Naive thymus-derived CD4-positive, alpha-beta T cell (primary cell): ENCODE measurements at regions of chr6 and their contacts with region 1.

Region 1: GRCh38 chr6:105402939-105403935 is at the start of gene PREP:
- DNase-seq: peak; percentile 64 to 90 (median 81)
- ATAC-seq: peak; percentile 96
- H3K4me3 ChIP-seq: peak within 1 kb of the TSS; percentile 83
- H3K4me3 Mint-ChIP-seq: peak within 1 kb of the TSS; percentile 92 to 98 (median 94)
- H3K27ac ChIP-seq: peak within 1 kb of the TSS; percentile 66
- H3K27ac Mint-ChIP-seq: peak within 1 kb of the TSS; percentile 45 to 92 (median 76)
- H3K4me1 ChIP-seq: peaks cover 27 to 28% of the 10 kb centered on the region in 2 donors
- H3K4me1 Mint-ChIP-seq: peaks cover 43 to 58% (median 54%) of the 10 kb centered on the region in 7 donors
- H3K27me3 ChIP-seq: no peaks in the 10 kb centered on the region
- H3K27me3 Mint-ChIP-seq: peaks cover 0 to 18% (median 14%) of the 10 kb centered on the region in 5 donors
- total RNA-seq, gene PREP: 22.2 to 46.7 (median 32.1) TPM

Region 2: DNA sequence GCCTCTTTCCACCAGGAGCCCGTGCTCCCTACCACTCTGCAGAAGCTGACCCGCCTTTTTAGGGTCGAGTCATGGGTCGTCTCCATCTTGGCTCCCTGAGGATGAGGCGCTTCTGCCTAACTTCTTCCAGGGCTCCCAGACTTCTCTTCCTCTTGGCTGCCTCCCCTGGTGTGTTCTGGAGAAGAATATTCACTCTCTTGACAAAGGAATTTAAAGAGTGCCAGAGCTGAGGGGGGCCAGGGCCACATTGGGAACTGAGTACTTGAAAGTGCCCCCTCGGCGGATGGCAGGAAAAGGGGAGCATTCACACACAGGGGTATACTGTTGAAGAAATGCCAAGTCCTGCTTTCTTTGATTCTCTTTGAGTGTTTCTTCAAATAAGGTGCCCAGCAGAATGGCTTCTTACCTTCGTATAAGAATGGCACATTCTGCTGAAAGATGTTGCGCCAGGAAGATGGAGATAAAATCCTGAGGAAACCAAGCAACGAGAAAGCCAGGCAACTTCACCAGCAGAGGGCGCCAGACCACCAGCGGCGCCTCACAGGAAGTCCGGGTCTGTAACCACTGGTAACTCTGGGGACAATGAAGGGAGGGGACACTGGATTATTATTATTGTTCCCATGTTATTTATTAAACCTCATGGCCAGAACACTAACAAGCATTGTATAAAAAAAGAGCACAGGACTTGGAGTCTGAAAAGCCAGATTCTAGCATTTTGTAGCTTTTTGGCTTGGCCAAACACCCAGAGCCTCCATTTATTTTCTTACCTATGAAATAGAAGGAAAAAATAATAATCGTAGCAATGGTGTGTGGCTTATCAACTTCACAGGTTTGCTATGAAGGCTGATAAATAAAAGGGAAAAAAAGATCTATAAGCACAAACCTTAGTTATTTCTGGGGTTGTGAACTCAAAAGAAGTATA is 720.3 kb before region 1 on chr6:
- CTCF ChIA-PET with region 1: interaction called, 3 read pairs
- POLR2A ChIA-PET with region 1: no interaction called
- intact Hi-C with region 1: loop called (anchors 10 kb)
- DNase-seq: peak; percentile 31 to 74 (median 63)
- ATAC-seq: peak; percentile 68
- H3K4me3 ChIP-seq: no peak overlapping the region
- H3K4me3 Mint-ChIP-seq: peak overlapping the region in 4 of 10 donors; percentile 5 to 40 (median 28)
- H3K27ac ChIP-seq: no peak overlapping the region
- H3K27ac Mint-ChIP-seq: peak overlapping the region in 1 of 9 donors; percentile 26
- H3K4me1 ChIP-seq: peaks cover 4 to 7% of the 10 kb centered on the region in 2 donors
- H3K4me1 Mint-ChIP-seq: peaks cover 8 to 24% (median 20%) of the 10 kb centered on the region in 7 donors
- H3K27me3 ChIP-seq: no peaks in the 10 kb centered on the region
- H3K27me3 Mint-ChIP-seq: no peaks in the 10 kb centered on the region

Region 3: GRCh38 chr6:105087571-105088211 is 315.5 kb before region 1 on chr6:
- CTCF ChIA-PET with region 1: interaction called, 7 read pairs
- POLR2A ChIA-PET with region 1: no interaction called
- intact Hi-C with region 1: loop called in 1 of 2 experiments (anchors 1 kb)
- DNase-seq: peak in 6 of 9 donors; percentile 11 to 43 (median 32)
- ATAC-seq: peak; percentile 67
- H3K4me3 ChIP-seq: no peak overlapping the region
- H3K4me3 Mint-ChIP-seq: no peak overlapping the region
- H3K27ac ChIP-seq: no peak overlapping the region
- H3K27ac Mint-ChIP-seq: no peak overlapping the region
- H3K4me1 ChIP-seq: no peaks in the 10 kb centered on the region
- H3K4me1 Mint-ChIP-seq: no peaks in the 10 kb centered on the region
- H3K27me3 ChIP-seq: no peaks in the 10 kb centered on the region
- H3K27me3 Mint-ChIP-seq: peaks cover 4 to 10% (median 6%) of the 10 kb centered on the region in 5 donors

Region 4: DNA sequence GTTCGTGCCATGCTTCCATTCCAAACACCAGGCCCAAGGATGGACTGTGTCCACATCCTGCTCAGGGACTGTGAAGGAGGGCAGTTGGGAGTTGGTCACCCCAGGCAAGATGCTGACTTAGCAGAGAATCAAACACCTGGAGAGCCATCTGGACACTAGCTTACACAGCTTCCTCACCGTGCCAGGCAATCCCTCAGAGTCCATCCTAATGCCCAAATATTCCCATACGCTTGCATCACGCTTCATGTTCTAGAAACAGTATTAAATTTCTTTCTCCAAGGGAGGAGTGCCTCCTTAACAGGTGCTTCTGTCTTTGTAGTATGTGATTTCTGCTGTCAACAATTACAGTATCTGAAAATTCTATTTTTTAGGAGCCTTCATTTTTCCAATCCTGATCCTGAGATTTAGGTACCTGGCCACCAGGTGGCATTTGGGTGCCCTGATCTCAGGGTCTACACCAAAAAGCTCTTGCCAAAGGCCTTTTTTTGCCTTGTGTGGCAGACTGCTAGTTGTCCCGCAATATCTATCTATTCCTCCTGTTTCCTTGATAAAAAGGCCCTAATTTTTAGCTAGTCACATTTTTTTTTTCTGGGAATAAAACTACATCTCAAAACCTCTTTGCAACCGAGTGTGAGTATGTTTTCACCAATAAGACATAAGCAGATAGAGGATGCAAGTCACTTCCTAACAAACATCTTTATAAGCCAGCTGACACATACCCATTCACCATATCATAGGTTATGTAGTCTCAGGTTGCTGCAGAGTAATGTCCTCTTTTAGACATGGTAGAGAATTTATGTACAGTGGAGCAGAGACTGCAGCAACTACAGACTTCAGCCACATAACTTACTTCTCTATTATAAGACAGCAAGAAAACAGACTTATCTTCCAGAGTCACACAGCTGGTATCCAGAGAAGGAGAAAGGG is 85.4 kb before region 1 on chr6:
- CTCF ChIA-PET with region 1: no interaction called
- POLR2A ChIA-PET with region 1: no interaction called
- intact Hi-C with region 1: loop called (anchors 1 to 2 kb)
- DNase-seq: no peak
- ATAC-seq: no peak
- H3K4me3 ChIP-seq: no peak overlapping the region
- H3K4me3 Mint-ChIP-seq: no peak overlapping the region
- H3K27ac ChIP-seq: no peak overlapping the region
- H3K27ac Mint-ChIP-seq: no peak overlapping the region
- H3K4me1 ChIP-seq: no peaks in the 10 kb centered on the region
- H3K4me1 Mint-ChIP-seq: peaks cover 0 to 5% (median 0%) of the 10 kb centered on the region in 7 donors
- H3K27me3 ChIP-seq: no peaks in the 10 kb centered on the region
- H3K27me3 Mint-ChIP-seq: no peaks in the 10 kb centered on the region

Region 5: GRCh38 chr6:105992315-105992961 is 589.2 kb after region 1 on chr6:
- CTCF ChIA-PET with region 1: no interaction called
- POLR2A ChIA-PET with region 1: no interaction called
- intact Hi-C with region 1: loop called in 1 of 2 experiments (anchors 5 kb)
- DNase-seq: peak; percentile 82 to 91 (median 89)
- ATAC-seq: peak; percentile 93
- H3K4me3 ChIP-seq: peak overlapping the region; percentile 89
- H3K4me3 Mint-ChIP-seq: peak overlapping the region; percentile 88 to 98 (median 92)
- H3K27ac ChIP-seq: peak overlapping the region; percentile 79
- H3K27ac Mint-ChIP-seq: peak overlapping the region; percentile 87 to 97 (median 93)
- H3K4me1 ChIP-seq: peaks cover 14 to 23% of the 10 kb centered on the region in 2 donors
- H3K4me1 Mint-ChIP-seq: peaks cover 16 to 58% (median 29%) of the 10 kb centered on the region in 7 donors
- H3K27me3 ChIP-seq: peaks cover 0 to 32% of the 10 kb centered on the region in 2 donors
- H3K27me3 Mint-ChIP-seq: peaks cover 48 to 73% (median 62%) of the 10 kb centered on the region in 5 donors

Region 6: DNA sequence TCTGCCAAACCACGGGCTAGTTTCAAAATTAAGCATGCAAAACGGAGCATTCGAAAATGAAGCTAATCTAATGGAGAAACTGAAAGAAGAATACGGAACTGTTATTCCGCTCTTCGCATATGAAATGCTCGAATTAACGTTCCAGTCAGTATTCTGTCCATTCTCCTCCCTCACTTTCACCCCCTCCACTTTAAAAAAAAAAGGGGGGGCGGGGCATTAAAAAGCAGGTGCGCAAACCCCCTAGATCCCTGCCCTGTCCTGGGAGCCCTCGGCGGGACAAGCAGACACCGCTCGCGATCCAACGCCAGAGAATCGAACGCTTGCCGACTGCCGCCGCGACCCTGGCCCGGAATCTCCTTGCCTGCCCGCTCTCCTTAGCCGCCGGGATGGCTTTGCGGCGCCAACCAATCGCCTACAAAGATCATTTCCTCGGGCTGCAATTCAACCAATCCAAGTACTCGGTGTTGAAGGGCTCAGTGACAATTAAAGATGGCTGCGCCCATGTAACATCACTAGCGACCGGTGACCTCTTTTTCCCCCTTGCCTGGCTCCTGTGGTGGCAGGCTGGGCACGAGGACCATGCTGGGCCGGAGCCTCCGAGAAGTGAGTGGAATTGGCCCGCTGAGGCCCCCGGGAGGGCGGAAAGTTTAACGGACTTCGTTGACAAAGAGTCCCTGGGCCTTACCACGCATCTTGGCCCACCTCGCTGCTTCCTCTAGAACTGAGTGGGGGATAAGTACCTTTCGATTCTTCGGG is 1226.0 kb after region 1 on chr6 and contains the starts of genes QRSL1 and RTN4IP1:
- CTCF ChIA-PET with region 1: no interaction called
- POLR2A ChIA-PET with region 1: no interaction called
- intact Hi-C with region 1: loop called in 1 of 2 experiments (anchors 10 kb)
- DNase-seq: peak; percentile 67 to 94 (median 90)
- ATAC-seq: peak; percentile 98
- H3K4me3 ChIP-seq: peak within 1 kb of the TSS; percentile 87
- H3K4me3 Mint-ChIP-seq: peak within 1 kb of the TSS; percentile 93 to 100 (median 98)
- H3K27ac ChIP-seq: peak within 1 kb of the TSS; percentile 94
- H3K27ac Mint-ChIP-seq: peak within 1 kb of the TSS; percentile 96 to 99 (median 98)
- H3K4me1 ChIP-seq: peaks cover 7 to 13% of the 10 kb centered on the region in 2 donors
- H3K4me1 Mint-ChIP-seq: peaks cover 13 to 67% (median 38%) of the 10 kb centered on the region in 7 donors
- H3K27me3 ChIP-seq: no peaks in the 10 kb centered on the region
- H3K27me3 Mint-ChIP-seq: no peaks in the 10 kb centered on the region
- total RNA-seq, gene QRSL1: 8.0 to 14.8 (median 13.6) TPM
- total RNA-seq, gene RTN4IP1: 5.1 to 6.4 (median 5.6) TPM